ENCODE measurements at regions of chr2 and their contacts with region 1.

Region 1: DNA sequence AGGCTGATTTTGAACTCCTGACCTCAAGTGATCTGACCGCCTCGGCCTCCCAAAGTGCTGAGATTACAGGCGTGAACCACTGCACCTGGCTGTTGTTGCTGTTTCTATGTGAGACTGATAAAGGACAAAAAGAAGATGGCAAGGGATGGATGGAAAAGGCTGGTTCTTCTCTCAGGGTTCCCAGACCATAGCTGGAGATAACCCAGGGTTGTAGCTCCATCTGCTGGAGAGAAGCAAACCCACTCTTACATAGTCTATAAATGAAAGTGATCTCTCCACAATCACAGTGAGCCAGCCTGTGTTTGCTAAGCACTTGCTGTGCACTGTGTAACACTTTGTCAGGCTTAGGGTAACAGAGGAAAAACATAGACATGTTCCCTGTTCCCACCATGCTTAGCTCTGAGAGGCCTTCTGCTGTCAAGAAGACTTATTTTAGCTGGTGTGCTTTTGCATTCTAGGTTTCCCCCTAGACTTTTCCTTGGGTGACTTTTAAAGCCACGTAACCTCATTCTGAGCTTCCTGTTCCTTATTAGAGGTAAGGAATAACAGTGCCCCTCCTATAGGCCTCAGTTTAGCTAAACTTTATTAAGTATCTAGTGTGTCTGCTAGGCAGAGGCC is 49.7 kb downstream of the LIMS1 start:
- DNase-seq: peak in 6 of 10 donors; percentile 37 to 73 (median 70)

Region 2: DNA sequence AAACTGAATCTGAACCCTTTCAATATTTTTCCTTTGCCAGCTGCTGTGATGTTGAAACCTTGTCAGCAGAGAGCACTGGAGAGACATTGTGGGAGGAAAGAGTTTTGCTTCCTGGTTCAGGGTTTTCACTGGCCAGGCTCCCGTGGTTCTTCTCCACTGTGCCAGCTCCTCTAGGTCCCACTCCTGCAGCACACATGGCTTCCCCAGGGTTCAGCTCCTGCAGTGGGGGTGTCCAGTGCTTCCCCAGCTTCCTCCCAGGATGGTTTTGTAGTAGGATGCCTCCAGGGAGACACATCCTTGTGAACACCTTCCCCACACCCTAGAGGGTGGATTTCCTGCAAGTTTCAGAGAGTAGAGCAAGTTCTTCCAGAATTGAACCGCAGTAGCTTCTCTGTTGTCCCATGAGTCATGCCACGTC is 368.2 kb before region 1 on chr2:
- intact Hi-C with region 1: loop called (anchors 5 kb)
- DNase-seq: no peak

Region 3: GRCh38 chr2:108351889-108352288 is 232.1 kb before region 1 on chr2:
- intact Hi-C with region 1: loop called (anchors 1 kb)
- DNase-seq: no peak

Region 4: GRCh38 chr2:108448678-108449493 is 135.1 kb before region 1 on chr2 and contains the start of gene GCC2:
- intact Hi-C with region 1: loop called (anchors 10 kb)
- DNase-seq: peak; percentile 90 to 99 (median 95)